Heart right ventricle (tissue), 16 donors: ENCODE measurements at regions of chr14 and their contacts with region 1.

Region 1: DNA sequence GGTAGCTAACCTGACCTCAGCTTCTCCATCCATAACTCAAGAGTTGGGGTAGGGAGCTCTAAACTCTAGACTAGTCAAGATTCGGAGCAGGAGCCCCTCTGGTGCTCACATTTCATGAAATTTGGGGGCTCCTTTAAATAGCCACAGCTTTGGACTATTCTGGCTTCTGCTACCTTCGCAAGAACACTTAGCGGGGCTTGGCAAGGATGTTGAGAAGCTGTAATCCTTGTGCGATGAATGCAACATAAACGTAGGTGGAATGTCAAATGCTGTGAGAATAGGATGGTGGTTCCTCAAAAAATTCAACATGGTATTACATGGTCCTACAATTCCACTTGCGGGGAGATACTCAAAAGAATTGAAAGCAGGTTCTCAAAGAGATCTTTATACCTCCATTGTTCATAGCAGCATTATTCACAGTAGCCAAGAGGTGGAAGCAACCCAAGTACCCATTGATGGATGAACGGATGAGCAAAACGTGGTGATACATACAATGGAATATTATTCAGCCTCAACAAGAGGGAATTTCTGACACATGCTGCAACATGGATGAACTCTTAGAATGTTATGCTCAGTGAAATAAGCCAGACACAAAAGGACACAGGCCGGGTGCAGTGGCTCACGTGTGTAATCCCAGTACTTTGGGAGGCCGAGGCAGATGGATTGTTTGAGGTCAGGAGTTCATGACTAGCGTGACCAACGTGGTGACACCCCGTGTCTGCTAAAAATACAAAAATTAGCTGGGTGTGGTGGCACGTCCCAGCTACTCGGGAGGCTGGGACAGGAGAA is 73.8 kb downstream of the ACTN1 start:
- DNase-seq: no peak
- ATAC-seq: no peak
- H3K4me3 ChIP-seq: no peak overlapping the region
- H3K27ac ChIP-seq: no peak overlapping the region
- H3K4me1 ChIP-seq: peaks cover 0 to 7% (median 0%) of the 10 kb centered on the region in 9 donors
- H3K27me3 ChIP-seq: no peaks in the 10 kb centered on the region
- CTCF ChIP-seq: no peak

Region 2: DNA sequence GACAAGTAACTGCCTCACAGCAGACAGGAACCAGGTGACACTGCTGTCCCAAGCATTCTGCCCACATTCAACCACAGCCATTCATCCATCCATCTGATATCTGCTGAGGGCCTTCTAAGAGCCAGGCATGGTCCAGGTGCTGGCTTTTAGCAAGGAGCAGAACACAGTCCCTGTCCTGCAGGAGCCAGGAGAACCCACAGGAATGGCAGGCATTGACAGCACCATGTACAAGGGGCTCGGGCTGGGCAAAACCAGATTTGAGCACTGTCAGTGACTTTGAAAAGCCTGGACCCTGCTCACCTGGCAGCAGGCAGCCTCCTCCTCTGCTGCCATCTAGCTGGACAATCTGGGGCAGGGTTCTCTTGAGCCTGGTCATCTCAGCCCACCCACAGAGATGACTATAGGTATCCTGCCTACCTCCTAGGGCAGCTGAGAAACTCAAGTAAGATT is 249.4 kb before region 1 on chr14:
- intact Hi-C with region 1: no loop called
- DNase-seq: no peak
- ATAC-seq: peak in 4 of 8 donors; percentile 17 to 30 (median 19)
- H3K4me3 ChIP-seq: no peak overlapping the region
- H3K27ac ChIP-seq: peak overlapping the region in 2 of 10 donors; percentile 10 to 15
- H3K4me1 ChIP-seq: peaks cover 19 to 55% (median 46%) of the 10 kb centered on the region in 9 donors
- H3K27me3 ChIP-seq: no peaks in the 10 kb centered on the region
- CTCF ChIP-seq: peak in 6 of 9 donors; percentile 20 to 48 (median 34)

Region 3: DNA sequence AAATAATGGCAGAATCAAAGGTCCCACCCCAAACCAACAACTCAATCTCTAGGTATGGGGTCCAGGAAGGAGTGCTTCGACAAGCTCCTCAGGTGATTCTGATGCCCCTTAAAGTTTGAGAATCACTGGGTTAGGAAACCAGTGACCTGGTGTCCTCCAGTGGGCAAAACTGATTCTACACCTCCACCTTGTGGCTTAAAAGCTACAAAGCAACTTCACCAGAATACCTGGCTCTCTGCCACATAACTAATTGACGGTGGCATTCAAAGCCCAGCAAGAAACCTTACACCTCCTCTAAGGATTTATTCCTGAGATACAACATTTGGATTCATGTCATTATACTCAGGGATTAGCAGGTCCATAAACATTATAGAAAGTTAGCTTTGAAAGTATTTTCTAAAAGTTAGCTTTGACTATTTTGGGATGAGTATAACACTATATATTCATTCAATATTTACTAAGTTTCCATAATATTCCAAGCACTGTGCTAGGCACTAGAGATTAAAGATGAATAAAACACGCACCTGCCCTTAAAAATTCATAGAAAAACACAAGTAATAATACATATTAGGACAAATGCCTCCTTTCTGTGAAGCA is 202.2 kb after region 1 on chr14:
- intact Hi-C with region 1: loop called in 7 of 10 experiments (anchors 5 kb)
- DNase-seq: peak in 1 of 2 donors; percentile 61
- ATAC-seq: peak; percentile 34 to 82 (median 66)
- H3K4me3 ChIP-seq: no peak overlapping the region
- H3K27ac ChIP-seq: no peak overlapping the region
- H3K4me1 ChIP-seq: peaks cover 0 to 6% (median 0%) of the 10 kb centered on the region in 9 donors
- H3K27me3 ChIP-seq: no peaks in the 10 kb centered on the region
- CTCF ChIP-seq: peak; percentile 34 to 79 (median 69)